Spleen (tissue), 13 donors: ENCODE measurements at regions of chr12 and their contacts with region 1.

Region 1: DNA sequence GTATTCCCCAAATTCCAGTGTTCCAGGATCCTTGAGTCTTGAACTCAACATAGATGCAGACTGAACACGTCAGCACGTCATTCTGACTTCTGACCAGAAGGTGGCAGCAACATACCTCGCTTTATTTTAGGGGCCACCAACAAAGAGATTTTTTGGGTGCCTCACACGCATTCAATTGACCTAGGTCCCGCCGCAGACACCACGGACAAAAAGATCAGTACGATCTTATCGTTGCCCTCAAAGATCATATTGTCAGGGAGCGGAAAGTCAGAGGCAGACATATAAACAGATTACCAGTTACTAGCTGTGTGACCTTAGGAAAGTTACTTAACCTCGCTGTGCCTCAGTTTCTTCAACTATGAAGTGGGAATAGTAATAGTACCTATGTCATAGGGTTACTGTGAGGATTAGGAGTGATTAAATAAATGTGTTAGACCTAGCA is 6.5 kb upstream of the PRPH start:
- DNase-seq: peak; percentile 56
- H3K4me3 ChIP-seq: no peak overlapping the region
- H3K27ac ChIP-seq: no peak overlapping the region
- H3K4me1 ChIP-seq: peaks cover 0 to 13% (median 4%) of the 10 kb centered on the region in 6 donors
- H3K27me3 ChIP-seq: peaks cover 0 to 72% (median 5%) of the 10 kb centered on the region in 7 donors
- CTCF ChIP-seq: peak; percentile 73 to 92 (median 86)
- POLR2A ChIP-seq: no peak

Region 2: GRCh38 chr12:48197971-48198671 is 1090.3 kb before region 1 on chr12:
- intact Hi-C with region 1: no loop called
- DNase-seq: peak; percentile 99
- H3K4me3 ChIP-seq: peak overlapping the region; percentile 38 to 73 (median 50)
- H3K27ac ChIP-seq: peak overlapping the region; percentile 91 to 99 (median 97)
- H3K4me1 ChIP-seq: peaks cover 10 to 50% (median 37%) of the 10 kb centered on the region in 6 donors
- H3K27me3 ChIP-seq: no peaks in the 10 kb centered on the region
- CTCF ChIP-seq: peak in 2 of 11 experiments; percentile 2 to 6
- POLR2A ChIP-seq: peak; percentile 95 to 98 (median 97)

Region 3: DNA sequence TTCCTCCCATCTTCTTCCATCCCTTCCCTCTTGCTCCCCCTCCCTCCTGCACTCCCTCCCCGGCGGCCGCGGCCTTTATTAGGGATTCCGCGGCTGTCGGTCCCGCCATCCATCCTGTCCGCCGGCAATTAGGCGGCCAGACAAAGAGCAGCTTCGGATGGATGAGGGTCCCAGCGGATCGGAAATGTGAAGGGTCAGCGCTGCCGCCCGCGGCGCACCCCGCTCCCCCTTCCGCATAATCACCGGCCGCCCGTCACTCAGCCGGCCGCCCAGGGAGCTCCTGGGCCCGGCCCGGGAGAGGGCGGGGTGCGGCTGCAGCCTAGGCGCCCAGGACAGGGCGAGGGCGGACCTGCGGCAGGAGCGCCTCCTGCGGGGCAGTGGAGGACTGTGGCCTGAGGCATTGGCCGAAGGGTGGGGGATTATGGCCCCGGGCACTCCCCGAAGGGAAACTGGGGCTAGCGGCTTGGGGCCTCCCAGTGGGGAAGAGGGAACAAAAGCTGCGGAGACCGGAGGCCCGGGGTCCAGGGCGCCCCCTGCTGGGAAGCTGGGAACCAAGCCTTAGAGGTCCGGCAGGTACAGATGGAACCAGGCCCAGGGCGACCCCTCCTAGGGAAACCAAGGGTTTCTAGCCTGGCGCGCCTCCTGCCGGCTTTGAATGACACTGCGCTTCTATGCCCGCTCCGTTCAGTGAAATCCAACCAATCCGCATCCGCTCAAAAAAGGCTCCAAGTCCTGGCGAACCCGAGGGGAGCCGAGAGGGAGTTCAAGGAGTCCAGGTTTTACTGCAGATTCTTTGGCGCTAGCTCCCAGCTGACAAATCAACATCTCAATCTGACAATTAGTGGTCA is 53.9 kb after region 1 on chr12:
- intact Hi-C with region 1: loop called (anchors 5 kb)
- DNase-seq: peak; percentile 92
- H3K4me3 ChIP-seq: peak overlapping the region; percentile 41 to 69 (median 48)
- H3K27ac ChIP-seq: no peak overlapping the region
- H3K4me1 ChIP-seq: peaks cover 38 to 67% (median 57%) of the 10 kb centered on the region in 6 donors
- H3K27me3 ChIP-seq: peaks cover 17 to 98% (median 53%) of the 10 kb centered on the region in 7 donors
- CTCF ChIP-seq: peak; percentile 62 to 91 (median 80)
- POLR2A ChIP-seq: no peak

Region 4: DNA sequence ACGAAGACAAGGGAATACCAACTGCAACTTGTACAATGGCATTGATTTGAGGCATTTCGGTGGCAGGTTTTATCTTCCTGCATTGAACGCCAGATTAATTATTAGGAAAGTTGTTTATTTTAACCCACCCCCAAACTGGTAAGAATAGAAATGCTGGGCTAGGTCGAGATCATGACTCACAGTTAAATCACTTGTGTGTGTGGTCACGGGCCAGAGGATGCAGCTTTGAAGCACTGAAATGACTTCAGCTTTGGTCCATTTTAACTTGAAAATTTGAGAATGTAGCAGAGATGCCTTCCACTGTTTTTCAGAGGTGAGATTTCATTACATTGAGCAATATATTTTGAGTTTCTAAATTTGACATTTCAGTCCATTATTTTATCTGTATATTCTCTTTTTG is 226.8 kb after region 1 on chr12:
- intact Hi-C with region 1: loop called (anchors 5 kb)
- DNase-seq: no peak
- H3K4me3 ChIP-seq: no peak overlapping the region
- H3K27ac ChIP-seq: no peak overlapping the region
- H3K4me1 ChIP-seq: peaks cover 0 to 4% (median 0%) of the 10 kb centered on the region in 6 donors
- H3K27me3 ChIP-seq: no peaks in the 10 kb centered on the region
- CTCF ChIP-seq: no peak
- POLR2A ChIP-seq: no peak

Region 5: DNA sequence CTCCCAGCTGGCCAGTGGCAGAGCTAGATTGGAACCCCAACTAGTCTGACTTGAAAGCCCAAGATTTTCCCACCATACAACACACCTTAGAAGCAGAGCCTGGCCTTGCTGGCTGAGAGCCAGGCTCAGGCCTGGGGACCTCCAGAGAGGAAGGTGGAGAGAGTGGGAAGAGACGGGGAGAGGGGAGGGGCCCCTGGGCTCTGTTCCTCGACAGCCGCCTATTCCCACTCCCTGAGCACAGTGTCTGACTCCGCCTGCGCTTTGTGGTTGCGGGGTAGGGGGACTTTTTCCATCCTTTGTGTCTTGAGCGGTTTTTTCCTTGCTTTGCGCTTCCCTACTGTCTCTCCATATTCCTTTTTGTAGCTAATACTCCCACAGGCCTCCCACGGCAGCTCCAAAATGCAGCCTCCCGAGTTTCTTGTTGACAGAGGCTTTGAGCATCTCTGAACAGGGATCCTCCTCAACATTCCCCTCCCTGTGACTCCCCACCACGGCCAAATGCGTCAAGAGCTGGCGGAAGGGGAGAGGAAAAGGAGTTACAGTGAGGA is 246.4 kb after region 1 on chr12:
- intact Hi-C with region 1: no loop called
- DNase-seq: peak; percentile 39
- H3K4me3 ChIP-seq: no peak overlapping the region
- H3K27ac ChIP-seq: no peak overlapping the region
- H3K4me1 ChIP-seq: peaks cover 4 to 47% (median 27%) of the 10 kb centered on the region in 6 donors
- H3K27me3 ChIP-seq: peaks cover 0 to 54% (median 30%) of the 10 kb centered on the region in 7 donors
- CTCF ChIP-seq: no peak
- POLR2A ChIP-seq: no peak

Region 6: DNA sequence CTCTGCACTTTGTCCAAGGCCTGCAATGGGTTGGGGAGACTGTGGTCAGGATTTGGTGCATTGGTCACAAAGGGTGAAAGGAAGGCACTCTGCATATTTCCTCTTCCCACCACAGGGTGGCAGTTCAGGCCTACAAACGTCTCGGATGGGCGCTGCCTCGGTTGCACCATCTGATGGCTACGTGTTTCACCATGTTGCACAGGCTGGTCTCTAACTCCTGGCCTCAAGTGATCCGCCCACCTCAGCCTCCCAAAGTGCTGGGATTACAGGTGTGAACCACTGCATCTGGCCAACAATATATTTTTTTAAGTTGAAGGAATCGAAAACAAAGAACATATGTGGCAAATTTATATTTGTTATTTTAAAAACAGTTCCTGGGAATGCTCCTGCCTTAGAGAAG is 488.0 kb after region 1 on chr12:
- intact Hi-C with region 1: no loop called
- DNase-seq: peak; percentile 83
- H3K4me3 ChIP-seq: peak overlapping the region in 1 of 8 donors; percentile 4
- H3K27ac ChIP-seq: no peak overlapping the region
- H3K4me1 ChIP-seq: peaks cover 0 to 22% (median 13%) of the 10 kb centered on the region in 6 donors
- H3K27me3 ChIP-seq: peaks cover 0 to 48% (median 10%) of the 10 kb centered on the region in 7 donors
- CTCF ChIP-seq: peak; percentile 49 to 87 (median 73)
- POLR2A ChIP-seq: no peak